PC-9 (cell line): ENCODE measurements at regions of chr14 and their contacts with region 1.

Region 1: GRCh38 chr14:56261046-56261445 is 142.8 kb downstream of the PELI2 start:
- DNase-seq: no peak
- H3K4me3 ChIP-seq: no peak overlapping the region
- H3K27ac ChIP-seq: no peak overlapping the region
- H3K4me1 ChIP-seq: no peaks in the 10 kb centered on the region
- H3K27me3 ChIP-seq: no peaks in the 10 kb centered on the region
- CTCF ChIP-seq: no peak

Region 2: DNA sequence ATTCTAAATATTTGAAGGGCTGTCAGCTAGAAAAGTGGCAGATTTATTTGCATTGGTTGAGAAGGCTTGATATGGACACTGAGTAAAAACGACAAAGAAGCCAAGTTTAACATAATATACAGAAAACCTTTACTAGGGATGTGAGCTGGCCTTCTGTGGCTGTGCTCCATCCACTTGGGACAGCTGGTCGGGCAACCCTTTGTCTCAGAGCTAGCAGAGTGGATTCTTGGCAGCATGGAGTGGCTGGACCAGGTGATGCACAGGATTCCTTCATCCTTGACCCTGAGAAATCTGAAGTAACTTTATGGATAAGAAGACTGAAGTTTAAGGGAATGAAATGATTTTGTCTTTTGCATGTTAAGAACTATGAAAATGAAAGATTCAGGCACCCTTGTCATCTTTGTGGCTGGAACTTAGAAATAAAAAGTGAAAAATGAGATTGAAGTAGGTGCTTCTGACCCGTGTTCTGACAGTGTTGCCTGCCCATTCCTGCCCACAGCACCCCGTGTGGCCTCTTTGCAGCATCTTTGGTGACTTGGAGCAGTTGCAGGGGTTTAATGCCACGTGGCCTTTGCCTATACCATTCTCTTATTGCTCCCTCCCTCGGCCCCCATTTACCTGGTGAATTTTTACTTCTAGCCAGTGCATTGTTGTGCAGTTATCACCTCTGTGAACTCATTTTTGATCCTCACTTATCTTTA is 110.3 kb before region 1 on chr14:
- CTCF ChIA-PET with region 1: no interaction called
- POLR2A ChIA-PET with region 1: interaction called, 11 read pairs
- intact Hi-C with region 1: no loop called
- DNase-seq: no peak
- H3K4me3 ChIP-seq: no peak overlapping the region
- H3K27ac ChIP-seq: no peak overlapping the region
- H3K4me1 ChIP-seq: no peaks in the 10 kb centered on the region
- H3K27me3 ChIP-seq: no peaks in the 10 kb centered on the region
- CTCF ChIP-seq: no peak